Uterus (tissue), 4 donors: ENCODE measurements at regions of chr9 and their contacts with region 1.

Region 1: DNA sequence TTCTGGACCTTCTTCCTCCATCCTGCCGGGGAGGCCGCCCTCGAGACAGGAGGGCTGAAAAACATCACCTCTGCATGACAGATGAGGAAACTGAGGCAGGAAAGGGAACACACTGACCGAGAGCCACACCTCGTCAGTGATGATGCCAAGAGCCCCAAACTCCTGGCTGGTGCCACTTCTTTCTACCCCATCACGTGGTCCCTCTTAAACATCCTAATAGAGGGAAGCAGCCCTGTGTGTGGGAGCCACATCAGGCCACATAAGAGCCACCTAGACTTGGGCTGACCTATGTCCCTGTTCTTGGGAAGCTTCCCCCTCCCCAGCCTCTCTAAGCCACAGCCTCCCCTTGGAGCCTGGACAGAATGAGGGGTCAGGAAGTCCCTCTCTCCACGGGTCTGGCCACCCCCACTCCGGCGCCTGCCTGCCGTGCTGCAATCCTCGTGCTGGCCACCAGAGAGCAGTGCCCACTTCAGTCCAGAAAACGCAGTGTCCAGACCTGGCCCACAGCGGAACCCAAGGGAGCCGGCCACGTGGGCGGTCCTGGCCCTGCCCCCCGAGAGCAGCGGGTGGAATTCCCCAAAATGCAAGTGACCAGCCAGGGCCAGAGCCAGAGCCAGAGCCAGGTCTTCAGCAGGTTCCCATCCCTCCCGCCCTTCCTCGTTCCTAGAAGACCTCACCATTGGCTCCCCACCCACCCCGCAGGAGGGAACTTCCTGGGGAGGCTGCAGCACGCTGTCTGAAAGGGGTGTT is 54.7 kb upstream of the SARDH start:
- DNase-seq: peak; percentile 72 to 82
- H3K4me3 ChIP-seq: no peak overlapping the region
- H3K27ac ChIP-seq: no peak overlapping the region
- H3K4me1 ChIP-seq: peaks cover 0 to 5% of the 10 kb centered on the region in 2 donors
- H3K27me3 ChIP-seq: no peaks in the 10 kb centered on the region
- CTCF ChIP-seq: peak; percentile 93 to 98 (median 97)
- POLR2A ChIP-seq: no peak

Region 2: DNA sequence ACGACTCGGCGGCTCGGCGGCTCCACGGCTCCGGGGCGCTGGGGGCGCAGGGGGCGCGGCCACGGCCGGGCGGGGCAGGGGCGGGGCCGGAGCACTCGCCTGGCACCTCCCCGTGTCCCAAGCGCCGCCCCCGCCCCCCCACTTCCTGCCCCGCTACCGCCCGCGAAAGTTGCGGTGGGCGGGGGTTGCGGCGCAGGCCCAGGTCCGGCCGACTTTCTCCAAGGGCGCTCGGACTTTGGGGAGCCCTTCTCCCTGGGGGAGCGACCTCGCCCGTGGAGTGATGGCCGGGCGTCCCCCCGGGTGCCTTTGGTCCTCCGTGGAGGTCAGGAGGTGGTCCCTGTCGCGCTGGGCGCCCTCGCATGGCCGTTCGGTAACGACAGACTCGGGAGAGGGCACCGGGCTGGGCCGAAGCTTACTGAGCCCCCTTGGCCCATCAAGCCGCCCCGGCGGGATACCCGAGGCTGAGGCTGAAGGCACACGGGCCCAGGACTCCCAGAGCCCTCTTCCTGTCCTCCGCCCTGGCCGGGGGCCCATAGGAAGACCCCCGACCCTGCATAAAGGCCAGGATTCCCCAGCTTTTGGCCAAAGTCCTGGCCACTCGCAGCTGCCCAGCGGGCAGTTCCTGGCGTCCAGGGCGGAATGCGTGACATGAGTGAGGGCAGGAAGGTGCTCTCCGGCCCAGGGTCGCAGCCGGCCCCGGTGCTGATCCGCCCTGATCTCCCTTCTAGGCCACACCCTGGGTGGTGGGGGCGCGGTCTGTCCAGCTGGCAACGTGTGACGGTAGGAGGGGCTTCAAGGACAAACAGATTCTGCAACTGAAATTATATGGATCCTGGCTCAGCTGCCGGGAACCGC is 200.1 kb after region 1 on chr9:
- intact Hi-C with region 1: loop called (anchors 5 kb)
- DNase-seq: peak; percentile 92 to 93
- H3K4me3 ChIP-seq: peak overlapping the region; percentile 51 to 82
- H3K27ac ChIP-seq: peak overlapping the region; percentile 82 to 95
- H3K4me1 ChIP-seq: peaks cover 0 to 20% of the 10 kb centered on the region in 2 donors
- H3K27me3 ChIP-seq: no peaks in the 10 kb centered on the region
- CTCF ChIP-seq: peak; percentile 34 to 50 (median 36)
- POLR2A ChIP-seq: peak; percentile 20 to 74